PC-9 (cell line): ENCODE measurements at regions of chr11 and their contacts with region 1.

Region 1: GRCh38 chr11:747158-748006 is at the start of gene TALDO1:
- DNase-seq: peak; percentile 65 to 89
- H3K4me3 ChIP-seq: peak within 1 kb of the TSS; percentile 87
- H3K27ac ChIP-seq: peak within 1 kb of the TSS; percentile 96
- H3K4me1 ChIP-seq: peaks cover 11% of the 10 kb centered on the region
- H3K27me3 ChIP-seq: no peaks in the 10 kb centered on the region
- CTCF ChIP-seq: no peak
- total RNA-seq, gene TALDO1: 434 and 446 TPM in 2 replicates

Region 2: DNA sequence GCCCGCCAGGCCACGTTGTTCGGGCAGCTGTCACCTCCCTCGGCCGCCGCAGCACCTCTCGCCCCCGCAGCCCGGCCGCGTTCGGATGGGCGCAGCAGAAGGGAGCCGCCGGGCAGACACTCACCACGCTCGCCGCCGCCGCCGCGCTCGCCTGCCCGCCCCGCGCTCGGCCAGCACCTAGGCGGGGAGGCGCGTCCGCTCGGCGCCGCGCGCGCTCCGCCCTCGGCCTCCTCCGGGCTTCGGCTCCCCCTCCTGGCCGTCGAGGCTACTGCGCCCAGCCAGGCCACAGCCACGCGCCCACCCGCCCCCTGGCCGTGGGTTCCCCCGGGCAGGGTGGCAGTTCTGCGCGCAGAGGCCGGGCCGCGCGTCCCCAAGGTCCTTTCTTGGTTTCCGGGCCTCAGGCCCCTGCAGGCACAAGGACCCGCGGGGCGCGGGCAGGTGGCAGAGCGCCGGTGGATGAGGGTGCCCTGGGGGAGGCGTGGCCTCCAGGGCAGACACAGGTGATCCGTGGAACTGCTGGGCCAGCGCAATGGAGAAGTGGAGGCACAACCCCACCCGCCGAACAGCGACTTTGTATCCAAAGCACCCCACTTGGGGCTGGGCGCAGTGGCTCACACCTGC is 50.8 kb after region 1 on chr11 and contains the start of gene SLC25A22:
- CTCF ChIA-PET with region 1: no interaction called
- POLR2A ChIA-PET with region 1: no interaction called
- intact Hi-C with region 1: loop called (anchors 5 kb)
- DNase-seq: peak; percentile 39 to 80
- H3K4me3 ChIP-seq: peak within 1 kb of the TSS; percentile 80
- H3K27ac ChIP-seq: no peak within 1 kb of the TSS
- H3K4me1 ChIP-seq: peaks cover 8% of the 10 kb centered on the region
- H3K27me3 ChIP-seq: no peaks in the 10 kb centered on the region
- CTCF ChIP-seq: peak; percentile 75
- total RNA-seq, gene SLC25A22: 24.6 and 25.8 TPM in 2 replicates

Region 3: GRCh38 chr11:942823-943222 is 195.4 kb after region 1 on chr11:
- CTCF ChIA-PET with region 1: no interaction called
- POLR2A ChIA-PET with region 1: interaction called, 12 read pairs
- intact Hi-C with region 1: no loop called
- DNase-seq: no peak
- H3K4me3 ChIP-seq: no peak overlapping the region
- H3K27ac ChIP-seq: peak overlapping the region; percentile 55
- H3K4me1 ChIP-seq: peaks cover 10% of the 10 kb centered on the region
- H3K27me3 ChIP-seq: no peaks in the 10 kb centered on the region
- CTCF ChIP-seq: no peak